ENCODE measurements at regions of chr12 and their contacts with region 1.

Region 1: DNA sequence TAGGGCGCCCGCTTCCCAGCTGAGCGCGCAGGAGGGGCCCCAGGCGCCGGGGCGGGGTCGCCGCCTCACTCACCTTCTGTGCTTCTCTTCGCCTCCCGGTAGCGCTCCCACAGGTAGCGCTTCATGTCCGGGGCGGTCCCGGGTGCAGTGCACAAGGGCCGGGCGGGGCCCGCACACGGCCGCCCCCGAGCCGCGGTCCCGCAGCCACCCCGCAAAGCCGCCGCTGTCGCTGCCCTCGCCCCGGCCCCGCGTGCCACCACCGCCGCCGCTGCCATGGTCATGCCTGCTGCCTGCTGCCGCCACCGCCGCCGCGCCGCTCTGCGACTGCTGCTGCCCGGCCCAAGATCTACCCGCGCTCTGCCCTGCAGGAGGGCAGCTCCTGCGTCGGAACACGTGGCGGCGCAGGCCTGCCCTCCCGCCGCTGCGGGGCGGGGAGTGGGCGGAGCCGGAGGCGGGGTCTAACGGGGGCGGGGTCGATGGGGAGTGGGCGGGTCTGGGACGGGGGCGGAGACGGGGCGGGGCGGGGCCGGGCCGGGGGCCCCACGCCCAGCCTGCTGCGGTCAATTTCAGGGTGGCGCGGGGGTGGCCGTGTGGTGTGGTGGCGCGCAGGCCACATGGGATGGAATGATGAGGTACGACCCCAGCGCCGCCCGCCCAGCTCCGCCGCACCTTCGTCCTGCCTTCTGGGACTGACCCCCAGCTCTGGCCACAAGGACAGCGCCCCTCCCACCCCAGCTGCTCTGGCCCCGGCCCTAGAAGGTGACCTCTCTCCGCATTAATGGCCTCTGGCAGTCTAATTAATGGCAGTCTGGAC is at the start of gene NT5DC3:
- DNase-seq: peak; percentile 23 to 85
- H3K4me3 ChIP-seq: peak within 1 kb of the TSS; percentile 95 to 96
- H3K27ac ChIP-seq: peak within 1 kb of the TSS; percentile 93 to 94
- H3K4me1 ChIP-seq: peaks cover 0 to 3% of the 10 kb centered on the region in 2 donors
- H3K27me3 ChIP-seq: no peaks in the 10 kb centered on the region
- CTCF ChIP-seq: no peak
- total RNA-seq, gene NT5DC3: 6.6 TPM

Region 2: GRCh38 chr12:103771466-103771865 is 69.6 kb before region 1 on chr12:
- intact Hi-C with region 1: loop called (anchors 5 kb)
- DNase-seq: no peak
- H3K4me3 ChIP-seq: no peak overlapping the region
- H3K27ac ChIP-seq: peak overlapping the region in 1 of 2 donors; percentile 24
- H3K4me1 ChIP-seq: peaks cover 5 to 13% of the 10 kb centered on the region in 2 donors
- H3K27me3 ChIP-seq: no peaks in the 10 kb centered on the region
- CTCF ChIP-seq: peak in 1 of 3 experiments; percentile 50

Region 3: DNA sequence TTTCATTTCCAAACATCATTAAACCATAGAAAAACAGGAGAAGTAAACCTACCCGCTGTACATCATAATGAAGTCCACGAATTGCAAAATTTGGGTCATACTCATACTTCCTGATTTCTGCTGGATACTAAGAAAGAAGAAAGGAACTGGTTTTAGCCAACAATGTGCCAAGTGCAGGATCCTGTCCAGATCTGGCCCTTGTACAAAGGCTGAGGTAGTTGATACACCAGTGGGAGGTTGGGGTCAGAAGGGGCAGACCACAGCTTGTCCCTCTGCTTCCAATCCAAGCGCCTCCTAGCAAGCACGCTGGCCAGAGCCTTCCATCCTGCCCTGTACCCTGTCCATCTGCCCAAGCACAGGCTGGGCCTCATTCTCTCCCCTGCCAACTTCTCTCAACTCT is 34.3 kb before region 1 on chr12:
- intact Hi-C with region 1: loop called (anchors 1 kb)
- DNase-seq: no peak
- H3K4me3 ChIP-seq: no peak overlapping the region
- H3K27ac ChIP-seq: peak overlapping the region; percentile 79 to 86
- H3K4me1 ChIP-seq: peaks cover 7 to 58% of the 10 kb centered on the region in 2 donors
- H3K27me3 ChIP-seq: no peaks in the 10 kb centered on the region
- CTCF ChIP-seq: no peak

Region 4: DNA sequence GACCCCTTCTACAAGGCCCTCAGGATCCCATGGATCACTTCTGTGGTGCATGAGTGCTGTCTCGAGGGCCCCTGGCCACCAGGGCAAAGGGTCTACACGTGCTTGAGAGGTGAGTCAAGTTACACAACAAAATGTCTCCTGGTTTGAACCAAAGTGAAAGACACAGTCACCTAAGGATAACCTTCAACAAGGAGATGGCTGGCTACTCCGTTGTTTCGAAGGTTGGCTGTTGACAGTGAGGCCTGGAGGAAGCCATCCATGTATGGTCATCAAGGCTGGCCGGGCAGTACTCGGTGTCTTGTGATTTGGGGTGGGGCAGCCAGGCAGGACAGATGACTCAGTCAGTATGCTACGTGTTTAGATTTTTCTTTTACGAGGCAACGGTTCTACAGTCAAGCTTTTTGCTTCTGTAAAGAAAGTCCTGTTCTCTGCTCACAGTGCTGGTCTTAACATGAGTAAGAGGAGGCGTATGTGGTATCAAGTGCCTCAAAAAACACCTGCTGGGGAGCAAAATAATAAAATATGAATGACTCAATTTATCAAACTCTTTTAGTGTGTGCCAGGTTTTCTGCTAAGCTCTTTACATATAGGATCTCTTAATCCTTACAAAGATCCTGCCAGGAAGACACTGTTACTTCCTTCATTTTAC is 18.0 kb after region 1 on chr12:
- intact Hi-C with region 1: loop called (anchors 1 kb)
- DNase-seq: peak; percentile 68 to 95
- H3K4me3 ChIP-seq: no peak overlapping the region
- H3K27ac ChIP-seq: peak overlapping the region; percentile 86 to 89
- H3K4me1 ChIP-seq: peaks cover 6 to 12% of the 10 kb centered on the region in 2 donors
- H3K27me3 ChIP-seq: no peaks in the 10 kb centered on the region
- CTCF ChIP-seq: no peak